ENCODE measurements at regions of chr3 and their contacts with region 1.

Region 1: GRCh38 chr3:48739955-48740823 is 23.2 kb upstream of the IP6K2 start:
- DNase-seq: peak; percentile 10 to 70 (median 42)
- ATAC-seq: peak; percentile 91
- H3K4me3 ChIP-seq: no peak overlapping the region
- H3K4me3 Mint-ChIP-seq: no peak overlapping the region
- H3K27ac ChIP-seq: no peak overlapping the region
- H3K27ac Mint-ChIP-seq: no peak overlapping the region
- H3K4me1 ChIP-seq: peaks cover 6% of the 10 kb centered on the region
- H3K4me1 Mint-ChIP-seq: no peaks in the 10 kb centered on the region
- H3K27me3 ChIP-seq: no peaks in the 10 kb centered on the region
- H3K27me3 Mint-ChIP-seq: no peaks in the 10 kb centered on the region
- CTCF ChIP-seq: peak; percentile 57

Region 2: GRCh38 chr3:48863122-48863521 is 122.9 kb after region 1 on chr3:
- CTCF ChIA-PET with region 1: no interaction called
- POLR2A ChIA-PET with region 1: interaction called, 5 read pairs
- intact Hi-C with region 1: loop called in 1 of 2 experiments (anchors 2 kb)
- DNase-seq: no peak
- ATAC-seq: no peak
- H3K4me3 ChIP-seq: no peak overlapping the region
- H3K4me3 Mint-ChIP-seq: no peak overlapping the region
- H3K27ac ChIP-seq: no peak overlapping the region
- H3K27ac Mint-ChIP-seq: no peak overlapping the region
- H3K4me1 ChIP-seq: no peaks in the 10 kb centered on the region
- H3K4me1 Mint-ChIP-seq: no peaks in the 10 kb centered on the region
- H3K27me3 ChIP-seq: no peaks in the 10 kb centered on the region
- H3K27me3 Mint-ChIP-seq: no peaks in the 10 kb centered on the region
- CTCF ChIP-seq: no peak

Region 3: DNA sequence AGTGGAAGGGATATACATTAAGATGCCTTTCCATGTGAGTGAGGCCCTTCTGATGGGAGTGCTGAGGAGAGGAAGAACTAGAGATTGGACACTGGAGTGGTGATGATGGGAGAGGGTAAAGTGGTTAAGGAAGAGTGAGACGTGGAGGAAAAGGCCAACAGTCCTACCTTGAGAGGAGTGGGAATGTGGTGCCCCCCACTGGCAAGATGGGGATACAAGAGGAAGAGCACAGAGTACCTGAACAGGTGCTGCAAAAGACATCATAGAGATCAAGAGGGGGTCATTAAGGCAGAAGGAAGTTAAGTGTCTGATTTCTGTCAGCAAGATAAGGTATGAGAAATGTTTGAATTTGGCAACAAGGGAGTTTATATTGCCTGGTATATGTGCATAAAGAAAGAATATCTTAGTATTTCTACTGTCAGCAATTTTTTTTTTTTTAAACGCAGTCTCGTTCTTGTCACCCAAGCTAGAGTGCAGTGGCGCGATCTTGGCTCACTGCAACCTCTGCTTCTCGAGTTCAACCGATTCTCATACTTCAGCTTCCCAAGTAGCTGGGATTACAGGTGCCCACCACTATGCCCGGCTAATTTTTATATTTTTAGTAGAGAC is 212.4 kb after region 1 on chr3:
- CTCF ChIA-PET with region 1: no interaction called
- POLR2A ChIA-PET with region 1: interaction called, 3 read pairs
- intact Hi-C with region 1: loop called (anchors 1 kb)
- DNase-seq: peak; percentile 28 to 75 (median 48)
- ATAC-seq: peak; percentile 79
- H3K4me3 ChIP-seq: no peak overlapping the region
- H3K4me3 Mint-ChIP-seq: no peak overlapping the region
- H3K27ac ChIP-seq: no peak overlapping the region
- H3K27ac Mint-ChIP-seq: no peak overlapping the region
- H3K4me1 ChIP-seq: no peaks in the 10 kb centered on the region
- H3K4me1 Mint-ChIP-seq: peaks cover 25% of the 10 kb centered on the region
- H3K27me3 ChIP-seq: no peaks in the 10 kb centered on the region
- H3K27me3 Mint-ChIP-seq: no peaks in the 10 kb centered on the region
- CTCF ChIP-seq: peak; percentile 57

Measured in CD4-positive, alpha-beta T cell (primary cell).